Body of pancreas (tissue), 4 donors: ENCODE measurements at regions of chr12 and their contacts with region 1.

Region 1: GRCh38 chr12:120432772-120433525 is 5.0 kb upstream of the COX6A1 start:
- DNase-seq: no peak
- ATAC-seq: no peak
- H3K4me3 ChIP-seq: no peak overlapping the region
- H3K27ac ChIP-seq: no peak overlapping the region
- H3K4me1 ChIP-seq: no peaks in the 10 kb centered on the region
- H3K27me3 ChIP-seq: no peaks in the 10 kb centered on the region
- CTCF ChIP-seq: no peak
- POLR2A ChIP-seq: no peak

Region 2: GRCh38 chr12:120342156-120342555 is 90.8 kb before region 1 on chr12:
- intact Hi-C with region 1: loop called (anchors 5 kb)
- DNase-seq: no peak
- ATAC-seq: no peak
- H3K4me3 ChIP-seq: no peak overlapping the region
- H3K27ac ChIP-seq: no peak overlapping the region
- H3K4me1 ChIP-seq: peaks cover 4% of the 10 kb centered on the region
- H3K27me3 ChIP-seq: no peaks in the 10 kb centered on the region
- CTCF ChIP-seq: no peak
- POLR2A ChIP-seq: no peak

Region 3: GRCh38 chr12:120356567-120357030 is 76.3 kb before region 1 on chr12:
- intact Hi-C with region 1: loop called (anchors 5 kb)
- DNase-seq: peak; percentile 80 to 81 (median 81)
- ATAC-seq: peak; percentile 89
- H3K4me3 ChIP-seq: no peak overlapping the region
- H3K27ac ChIP-seq: peak overlapping the region in 1 of 4 donors; percentile 2
- H3K4me1 ChIP-seq: no peaks in the 10 kb centered on the region
- H3K27me3 ChIP-seq: no peaks in the 10 kb centered on the region
- CTCF ChIP-seq: peak; percentile 64 to 93 (median 87)
- POLR2A ChIP-seq: no peak